ENCODE measurements at regions of chr9 and their contacts with region 1.

Region 1: DNA sequence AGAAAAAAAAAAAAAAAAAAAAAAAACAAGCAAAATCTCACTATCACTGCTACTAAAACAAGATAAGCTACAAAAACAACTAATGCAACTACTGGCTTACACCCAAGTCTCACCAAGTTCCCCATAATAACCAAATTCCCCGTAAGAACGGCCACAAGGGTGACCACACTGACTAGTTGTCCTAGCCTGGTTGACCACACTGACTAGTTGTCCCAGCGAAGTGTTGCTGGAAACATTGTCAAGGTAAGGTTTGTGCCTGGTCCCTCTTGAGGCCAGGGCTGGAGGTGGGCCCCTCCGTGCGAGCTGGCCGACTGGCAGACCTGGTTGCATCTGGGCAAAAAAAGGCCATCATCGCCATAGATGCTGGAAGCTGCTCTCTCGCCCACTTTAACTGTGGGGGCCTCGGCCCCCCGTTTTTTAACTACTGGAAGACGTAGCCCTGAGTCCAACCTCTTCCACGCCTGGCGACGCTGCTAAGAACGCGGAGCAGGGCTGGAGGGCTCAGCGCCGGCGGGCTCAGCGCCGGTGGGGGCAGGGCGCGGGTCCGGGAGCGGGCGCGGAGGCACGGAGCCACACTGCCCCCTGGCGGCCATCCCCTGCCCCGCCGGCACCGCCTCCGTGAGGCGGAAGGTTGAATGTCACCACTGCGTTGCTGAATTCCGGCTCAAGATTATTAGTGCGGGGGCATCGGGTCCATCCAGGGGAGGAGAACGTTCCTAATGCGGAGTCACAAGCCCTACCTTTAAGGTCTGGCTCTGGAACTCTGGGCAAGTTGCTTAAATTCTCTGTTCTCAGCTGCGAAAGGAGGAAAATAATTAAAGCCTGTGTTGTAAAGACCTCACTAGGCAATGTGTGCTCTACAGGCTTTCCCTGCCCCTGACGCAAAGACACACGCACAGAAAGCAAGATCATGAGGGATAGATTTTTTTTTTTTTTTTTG is 84.0 kb downstream of the HSD17B3 start:
- DNase-seq: no peak
- H3K4me3 ChIP-seq: peak overlapping the region; percentile 39 to 50 (median 44)
- H3K27ac ChIP-seq: peak overlapping the region; percentile 20 to 67 (median 58)
- H3K4me1 ChIP-seq: peaks cover 17 to 29% (median 28%) of the 10 kb centered on the region in 4 donors
- H3K27me3 ChIP-seq: peaks cover 0 to 13% (median 0%) of the 10 kb centered on the region in 4 donors
- CTCF ChIP-seq: peak; percentile 92 to 100 (median 99)
- EP300 ChIP-seq: no peak
- POLR2A ChIP-seq: no peak

Region 2: DNA sequence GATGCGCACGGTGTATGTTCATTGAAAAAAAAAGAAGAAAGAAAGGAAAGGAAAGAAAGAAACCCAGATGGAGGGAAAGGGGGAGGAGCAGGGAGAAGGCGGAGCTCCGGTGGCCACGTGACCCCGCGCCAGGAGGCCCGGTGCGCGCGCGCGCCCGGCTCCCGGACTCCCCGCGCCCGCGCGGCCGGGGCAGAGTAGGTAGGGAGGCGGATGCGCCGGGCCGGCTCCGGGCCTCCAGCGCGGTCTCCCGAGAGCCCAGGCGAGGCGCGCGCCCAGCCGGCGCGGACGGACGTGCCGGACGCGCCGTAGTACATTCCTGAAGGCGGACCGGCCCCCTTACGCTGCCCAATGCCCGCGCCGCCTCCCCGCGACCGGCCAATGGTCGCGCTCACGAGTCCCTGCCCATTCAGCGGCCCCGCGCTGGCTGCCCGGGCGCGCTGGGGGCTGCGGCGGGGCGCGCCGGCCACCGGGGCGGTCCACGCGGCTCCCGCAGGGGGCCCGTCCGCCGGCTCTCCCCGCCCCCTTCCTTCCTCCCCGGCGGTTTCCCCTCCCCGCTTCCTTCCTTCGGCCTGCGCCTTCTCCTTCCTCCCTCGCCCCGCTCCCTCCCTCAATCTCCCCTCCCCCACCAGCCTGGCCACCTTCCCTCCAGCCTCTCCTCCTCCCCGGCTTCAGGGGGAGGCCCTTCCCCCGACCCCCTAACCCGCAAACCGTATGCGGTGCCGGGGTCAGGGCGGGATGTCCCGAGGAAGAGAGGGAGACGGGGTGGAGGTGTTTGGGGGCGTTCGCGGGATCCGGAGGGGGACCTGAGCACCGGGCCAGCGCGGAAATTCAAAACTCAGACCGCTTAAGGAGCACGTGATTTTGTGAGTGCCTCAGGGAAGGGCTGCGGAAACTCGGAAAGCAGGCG is 707.1 kb before region 1 on chr9:
- intact Hi-C with region 1: loop called (anchors 5 kb)
- DNase-seq: no peak
- H3K4me3 ChIP-seq: peak overlapping the region; percentile 80 to 94 (median 88)
- H3K27ac ChIP-seq: peak overlapping the region; percentile 87 to 94 (median 94)
- H3K4me1 ChIP-seq: peaks cover 27 to 34% (median 33%) of the 10 kb centered on the region in 4 donors
- H3K27me3 ChIP-seq: peaks cover 0 to 14% (median 5%) of the 10 kb centered on the region in 4 donors
- CTCF ChIP-seq: no peak
- EP300 ChIP-seq: no peak
- POLR2A ChIP-seq: peak; percentile 33

Region 3: DNA sequence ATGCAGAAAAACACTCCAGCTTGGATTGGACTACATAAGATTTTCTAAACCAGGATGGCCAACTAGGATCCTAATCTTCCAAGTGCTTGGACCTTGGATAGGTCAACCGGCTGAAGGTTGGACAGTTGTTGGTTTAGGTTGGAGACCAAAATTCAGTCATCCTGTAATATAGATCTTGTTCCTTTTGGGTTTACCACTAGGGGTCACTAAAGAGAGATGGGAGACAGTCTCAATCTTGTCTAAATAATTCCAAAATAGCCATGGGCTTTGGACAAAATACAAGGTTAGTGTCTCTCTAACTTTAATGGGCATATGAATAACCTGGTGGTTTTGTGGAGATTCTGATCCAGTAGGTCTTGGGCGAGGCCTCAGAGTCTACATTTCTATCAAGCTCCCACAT is 491.3 kb before region 1 on chr9:
- intact Hi-C with region 1: loop called (anchors 2 kb)
- DNase-seq: no peak
- H3K4me3 ChIP-seq: no peak overlapping the region
- H3K27ac ChIP-seq: no peak overlapping the region
- H3K4me1 ChIP-seq: no peaks in the 10 kb centered on the region
- H3K27me3 ChIP-seq: no peaks in the 10 kb centered on the region
- CTCF ChIP-seq: peak; percentile 68 to 77 (median 70)
- EP300 ChIP-seq: no peak
- POLR2A ChIP-seq: no peak

Region 4: DNA sequence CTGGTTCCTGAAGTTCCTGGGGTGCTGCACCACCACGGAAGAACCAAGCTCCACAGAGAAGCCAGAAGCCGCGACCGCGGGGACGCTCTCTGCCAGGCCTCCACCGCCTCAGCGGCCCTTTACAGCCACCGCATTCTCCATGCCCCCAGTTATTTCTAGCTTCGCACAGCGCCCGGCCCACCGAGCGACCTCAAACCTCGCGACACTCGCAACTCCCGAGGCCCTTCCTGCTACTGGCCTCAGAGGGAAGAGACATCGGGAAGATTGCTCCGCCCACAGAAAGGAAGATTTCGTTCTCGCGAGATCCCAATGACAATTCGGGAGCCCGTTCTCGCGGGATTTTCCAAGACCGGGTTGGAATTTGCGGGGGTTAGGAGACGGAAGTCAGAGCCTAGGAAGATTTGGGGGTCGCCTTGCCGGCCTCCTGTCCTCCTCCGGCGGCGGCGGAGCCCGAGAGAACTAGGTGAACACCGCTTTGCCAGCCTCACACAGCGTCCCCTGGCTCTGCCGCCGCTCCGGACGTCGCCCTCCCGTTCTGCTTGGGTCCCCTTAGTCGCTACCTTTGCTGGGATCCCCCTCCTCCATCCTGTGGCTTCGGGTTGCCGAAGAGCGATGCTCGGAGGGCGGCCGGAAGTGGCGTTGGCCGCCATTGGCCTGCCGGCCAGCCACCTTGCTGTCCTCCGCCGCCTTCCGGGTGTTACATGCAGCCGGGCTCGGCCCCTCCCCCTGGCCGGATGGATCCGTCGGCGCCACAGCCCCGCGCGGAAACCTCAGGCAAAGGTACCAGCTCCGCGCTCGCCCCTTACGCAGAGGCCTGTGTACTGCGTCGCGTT is 342.5 kb before region 1 on chr9 and contains the start of gene ERCC6L2:
- intact Hi-C with region 1: loop called (anchors 5 kb)
- DNase-seq: peak; percentile 98
- H3K4me3 ChIP-seq: no peak within 1 kb of the TSS
- H3K27ac ChIP-seq: no peak within 1 kb of the TSS
- H3K4me1 ChIP-seq: peaks cover 14 to 34% (median 27%) of the 10 kb centered on the region in 4 donors
- H3K27me3 ChIP-seq: no peaks in the 10 kb centered on the region
- CTCF ChIP-seq: peak in 1 of 3 experiments; percentile 24
- EP300 ChIP-seq: no peak
- POLR2A ChIP-seq: no peak
- total RNA-seq, gene ERCC6L2: 78.1 to 96.4 (median 86.5) TPM

Region 5: DNA sequence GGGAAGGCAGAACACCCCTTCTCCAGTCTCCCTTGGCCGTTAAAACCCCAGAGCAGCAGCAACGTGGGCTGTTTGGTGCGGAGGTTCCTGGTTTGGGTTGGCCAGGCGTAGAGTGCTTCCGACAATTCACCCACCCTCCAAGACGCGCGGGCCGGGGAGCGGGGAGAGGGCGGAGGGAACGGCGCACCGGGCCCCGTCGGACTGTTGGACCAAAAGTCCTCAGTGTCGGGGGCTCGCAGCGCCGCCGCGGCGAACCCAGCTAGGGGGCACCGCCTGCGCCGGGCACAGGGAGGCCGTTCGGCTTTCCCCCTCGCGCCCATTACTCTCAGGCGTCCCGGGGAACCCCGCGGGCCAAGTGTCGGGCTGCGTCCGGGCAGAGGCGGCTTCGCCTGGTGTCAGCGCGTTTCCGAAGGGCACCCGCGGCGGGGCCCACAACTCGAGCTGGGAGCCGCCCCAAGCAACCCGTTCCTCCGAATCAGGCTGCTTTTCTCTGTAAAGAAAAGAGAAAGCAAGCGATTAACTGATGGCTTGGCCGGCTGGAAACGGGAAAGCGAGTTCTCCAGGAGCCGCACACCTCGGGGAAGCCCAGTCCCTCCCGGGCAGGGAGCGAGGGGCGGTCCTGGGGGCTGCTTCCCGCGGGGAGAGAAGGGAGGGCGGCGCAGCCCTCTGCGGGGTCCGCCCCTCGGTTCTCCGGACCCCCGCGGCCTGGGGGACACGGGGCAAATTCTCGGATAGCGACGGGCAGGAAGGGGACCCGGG is 197.1 kb before region 1 on chr9:
- intact Hi-C with region 1: loop called (anchors 10 kb)
- DNase-seq: peak; percentile 90
- H3K4me3 ChIP-seq: peak overlapping the region; percentile 58 to 74 (median 62)
- H3K27ac ChIP-seq: peak overlapping the region; percentile 69 to 84 (median 74)
- H3K4me1 ChIP-seq: peaks cover 24 to 32% (median 29%) of the 10 kb centered on the region in 4 donors
- H3K27me3 ChIP-seq: peaks cover 0 to 24% (median 3%) of the 10 kb centered on the region in 4 donors
- CTCF ChIP-seq: no peak
- EP300 ChIP-seq: no peak
- POLR2A ChIP-seq: no peak

Region 6: GRCh38 chr9:96150324-96151227 is 67.4 kb before region 1 on chr9:
- intact Hi-C with region 1: loop called (anchors 10 kb)
- DNase-seq: no peak
- H3K4me3 ChIP-seq: no peak overlapping the region
- H3K27ac ChIP-seq: no peak overlapping the region
- H3K4me1 ChIP-seq: peaks cover 0 to 31% (median 22%) of the 10 kb centered on the region in 4 donors
- H3K27me3 ChIP-seq: no peaks in the 10 kb centered on the region
- CTCF ChIP-seq: no peak
- EP300 ChIP-seq: no peak
- POLR2A ChIP-seq: no peak